IMR-90 (cell line): ENCODE measurements at regions of chr16 and their contacts with region 1.

Region 1: GRCh38 chr16:19502395-19503131 is 19.3 kb downstream of the GDE1 start:
- DNase-seq: peak; percentile 73
- ATAC-seq: peak; percentile 90
- H3K4me3 ChIP-seq: no peak overlapping the region
- H3K27ac ChIP-seq: no peak overlapping the region
- H3K4me1 ChIP-seq: no peaks in the 10 kb centered on the region
- H3K27me3 ChIP-seq: no peaks in the 10 kb centered on the region
- CTCF ChIP-seq: peak; percentile 69
- POLR2A ChIP-seq: no peak
- RAD21 ChIP-seq: peak; percentile 68

Region 2: DNA sequence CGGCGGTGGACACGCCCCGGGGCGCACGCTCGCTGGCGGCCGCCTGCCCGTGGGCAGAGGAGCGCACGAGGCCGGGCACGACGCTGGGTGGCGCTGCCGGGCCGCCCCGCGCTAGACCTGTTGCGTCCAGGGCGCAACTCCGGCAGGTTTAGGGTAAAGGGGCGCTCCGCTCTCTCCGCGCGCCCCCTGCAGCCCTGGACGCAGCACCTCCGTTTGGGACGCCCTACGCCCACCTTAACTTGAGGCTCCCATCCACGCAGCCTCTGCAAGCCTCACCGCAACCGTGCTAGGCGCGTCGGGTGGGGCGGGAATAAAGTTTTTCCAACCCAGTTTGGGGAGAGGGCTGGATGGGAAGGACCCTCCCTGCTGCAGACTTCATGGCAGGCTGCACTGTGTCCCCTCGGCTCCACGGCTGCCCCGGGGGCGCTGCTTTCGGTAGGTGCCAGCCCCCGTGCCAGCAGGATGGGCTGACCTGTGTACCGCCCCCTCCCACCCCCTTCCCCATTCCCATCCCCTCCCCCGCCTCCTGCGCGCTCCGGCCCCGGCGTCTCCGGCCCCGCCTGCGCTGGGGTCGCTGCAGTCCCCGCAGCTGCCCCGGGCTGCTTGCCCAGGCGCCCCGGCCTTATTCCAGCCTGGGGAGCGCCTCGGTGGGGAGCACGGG is 334.7 kb before region 1 on chr16 and contains the start of gene SYT17:
- CTCF ChIA-PET with region 1: no interaction called
- POLR2A ChIA-PET with region 1: no interaction called
- dilution Hi-C with region 1: no loop called
- in situ Hi-C with region 1: no loop called
- intact Hi-C with region 1: loop called (anchors 5 kb)
- DNase-seq: peak; percentile 48
- ATAC-seq: peak; percentile 97
- H3K4me3 ChIP-seq: peak within 1 kb of the TSS; percentile 43
- H3K27ac ChIP-seq: no peak within 1 kb of the TSS
- H3K4me1 ChIP-seq: peaks cover 2% of the 10 kb centered on the region
- H3K27me3 ChIP-seq: peaks cover 35% of the 10 kb centered on the region
- CTCF ChIP-seq: peak; percentile 79
- POLR2A ChIP-seq: no peak
- RAD21 ChIP-seq: peak; percentile 71
- total RNA-seq, gene SYT17: not detected in 2 replicates

Region 3: GRCh38 chr16:19366391-19366790 is 136.2 kb before region 1 on chr16:
- CTCF ChIA-PET with region 1: no interaction called
- POLR2A ChIA-PET with region 1: no interaction called
- dilution Hi-C with region 1: no loop called
- in situ Hi-C with region 1: no loop called
- intact Hi-C with region 1: no loop called
- DNase-seq: no peak
- ATAC-seq: no peak; the same call in 1 of the 2 replicates
- H3K4me3 ChIP-seq: no peak overlapping the region
- H3K27ac ChIP-seq: no peak overlapping the region
- H3K4me1 ChIP-seq: no peaks in the 10 kb centered on the region
- H3K27me3 ChIP-seq: peaks cover 3% of the 10 kb centered on the region
- CTCF ChIP-seq: no peak
- POLR2A ChIP-seq: no peak
- RAD21 ChIP-seq: no peak

Region 4: DNA sequence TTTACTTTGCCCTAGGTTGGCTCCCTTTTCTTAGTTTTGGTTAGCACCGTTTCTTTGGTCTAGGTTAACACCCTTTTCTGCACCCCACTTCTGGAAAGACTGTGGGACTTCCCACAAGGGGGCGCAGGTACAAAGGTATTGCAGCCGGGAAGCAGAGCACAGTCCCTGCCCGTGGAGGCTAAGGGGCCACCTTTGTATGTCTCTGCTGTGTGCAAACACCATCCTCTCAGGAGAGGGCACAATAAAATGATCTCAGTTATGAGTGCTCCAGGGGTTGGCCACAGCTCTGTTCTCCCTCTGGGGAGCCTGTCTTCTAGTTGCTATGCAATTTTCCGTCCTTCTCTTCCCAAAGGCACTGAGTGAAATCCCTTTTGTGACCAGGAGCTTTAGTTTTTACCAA is 113.3 kb before region 1 on chr16:
- CTCF ChIA-PET with region 1: interaction called, 3 read pairs
- POLR2A ChIA-PET with region 1: no interaction called
- dilution Hi-C with region 1: no loop called
- in situ Hi-C with region 1: no loop called
- intact Hi-C with region 1: loop called (anchors 1 kb)
- DNase-seq: no peak
- ATAC-seq: peak; percentile 46; the same call in 1 of the 2 replicates
- H3K4me3 ChIP-seq: no peak overlapping the region
- H3K27ac ChIP-seq: no peak overlapping the region
- H3K4me1 ChIP-seq: no peaks in the 10 kb centered on the region
- H3K27me3 ChIP-seq: no peaks in the 10 kb centered on the region
- CTCF ChIP-seq: 0 out of 2 replicates have a peak, but pooled peaks have one; percentile 25
- POLR2A ChIP-seq: no peak
- RAD21 ChIP-seq: 0 out of 2 replicates have a peak, but pooled peaks have one; percentile 26

Region 5: DNA sequence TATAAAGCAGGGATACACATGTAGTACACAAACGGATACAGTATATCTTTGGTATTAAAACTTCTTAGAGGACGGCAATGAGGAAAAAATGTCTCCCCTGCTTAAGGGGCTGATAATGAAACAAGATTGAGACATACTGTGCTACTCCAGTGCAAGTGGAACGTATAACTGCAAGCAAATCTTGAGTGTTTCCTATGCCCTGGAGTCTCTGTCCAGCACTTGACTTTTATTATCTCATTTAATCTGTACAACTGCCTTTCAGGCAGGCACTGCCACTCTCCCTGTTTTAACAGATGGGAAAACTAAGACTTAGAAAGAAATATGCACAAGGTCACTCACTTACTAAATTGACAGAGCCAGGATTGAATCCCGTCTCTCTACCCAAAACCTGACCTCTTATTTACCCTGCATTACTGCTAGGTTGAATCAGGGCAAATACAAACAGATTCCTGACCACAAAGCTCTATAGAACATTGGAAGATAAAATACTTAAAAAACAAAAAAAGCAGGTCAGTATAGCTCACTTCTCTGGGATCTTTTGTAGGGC is 56.2 kb before region 1 on chr16:
- CTCF ChIA-PET with region 1: no interaction called
- POLR2A ChIA-PET with region 1: no interaction called
- dilution Hi-C with region 1: no loop called
- in situ Hi-C with region 1: no loop called
- intact Hi-C with region 1: no loop called
- DNase-seq: no peak
- ATAC-seq: no peak
- H3K4me3 ChIP-seq: no peak overlapping the region
- H3K27ac ChIP-seq: no peak overlapping the region
- H3K4me1 ChIP-seq: no peaks in the 10 kb centered on the region
- H3K27me3 ChIP-seq: no peaks in the 10 kb centered on the region
- CTCF ChIP-seq: no peak
- POLR2A ChIP-seq: no peak
- RAD21 ChIP-seq: no peak